GM18951 (cell line): ENCODE measurements at regions of chr1 and their contacts with region 1.

Region 1: DNA sequence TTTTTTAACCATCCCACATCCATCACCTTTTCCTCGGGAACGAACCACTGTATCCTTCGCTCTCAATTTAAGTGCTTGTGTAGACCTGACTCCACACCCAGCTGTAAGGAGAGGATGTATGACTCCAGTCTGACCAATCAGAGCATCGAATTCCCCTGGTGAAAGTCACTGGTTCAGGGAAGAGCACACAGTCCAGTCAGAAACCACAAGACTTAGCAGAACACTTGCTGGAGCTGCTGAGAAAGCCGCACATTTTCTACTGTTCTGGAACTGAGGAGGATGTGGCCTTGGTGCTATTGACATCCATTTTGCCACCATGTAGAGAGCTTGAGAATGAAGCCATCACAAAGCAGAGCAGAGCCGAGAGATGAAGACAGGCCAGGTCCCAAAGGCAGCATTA is 59.9 kb upstream of the CNN3 start:
- POLR2A ChIP-seq: no peak

Region 2: GRCh38 chr1:94622757-94623156 is 364.0 kb before region 1 on chr1:
- in situ Hi-C with region 1: no loop called
- POLR2A ChIP-seq: no peak

Region 3: GRCh38 chr1:94949681-94950661 is 36.8 kb before region 1 on chr1:
- in situ Hi-C with region 1: loop called (anchors 5 kb)
- POLR2A ChIP-seq: no peak